ENCODE measurements at regions of chr13 and their contacts with region 1.

Region 1: GRCh38 chr13:97221989-97222700 is at the start of gene MBNL2:
- DNase-seq: peak; percentile 72
- ATAC-seq: peak; percentile 94
- H3K4me3 ChIP-seq: peak within 1 kb of the TSS; percentile 79 to 96
- H3K27ac ChIP-seq: peak within 1 kb of the TSS; percentile 99
- H3K4me1 ChIP-seq: peaks cover 39% of the 10 kb centered on the region
- H3K27me3 ChIP-seq: no peaks in the 10 kb centered on the region
- CTCF ChIP-seq: no peak
- total RNA-seq, gene MBNL2: 103 TPM

Region 2: GRCh38 chr13:97116754-97117153 is 105.4 kb before region 1 on chr13:
- CTCF ChIA-PET with region 1: no interaction called
- POLR2A ChIA-PET with region 1: interaction called, 11 read pairs
- in situ Hi-C with region 1: no loop called
- intact Hi-C with region 1: no loop called
- DNase-seq: no peak
- ATAC-seq: no peak
- H3K4me3 ChIP-seq: no peak overlapping the region
- H3K27ac ChIP-seq: peak overlapping the region; percentile 98
- H3K4me1 ChIP-seq: peaks cover 66% of the 10 kb centered on the region
- H3K27me3 ChIP-seq: no peaks in the 10 kb centered on the region
- CTCF ChIP-seq: no peak

Region 3: GRCh38 chr13:97141564-97142005 is 80.6 kb before region 1 on chr13:
- CTCF ChIA-PET with region 1: no interaction called
- POLR2A ChIA-PET with region 1: interaction called, 11 read pairs
- in situ Hi-C with region 1: no loop called
- intact Hi-C with region 1: no loop called
- DNase-seq: peak; percentile 69
- ATAC-seq: peak; percentile 98
- H3K4me3 ChIP-seq: peak overlapping the region; percentile 35 to 44
- H3K27ac ChIP-seq: peak overlapping the region; percentile 97
- H3K4me1 ChIP-seq: peaks cover 48% of the 10 kb centered on the region
- H3K27me3 ChIP-seq: no peaks in the 10 kb centered on the region
- CTCF ChIP-seq: no peak

Region 4: GRCh38 chr13:97242755-97243497 is 20.8 kb after region 1 on chr13:
- CTCF ChIA-PET with region 1: no interaction called
- POLR2A ChIA-PET with region 1: interaction called, 11 read pairs
- in situ Hi-C with region 1: no loop called
- intact Hi-C with region 1: no loop called
- DNase-seq: no peak
- ATAC-seq: peak; percentile 74
- H3K4me3 ChIP-seq: peak overlapping the region in 1 of 2 experiments; percentile 23; a peak in 2 of 4 replicates
- H3K27ac ChIP-seq: peak overlapping the region; percentile 100
- H3K4me1 ChIP-seq: peaks cover 94% of the 10 kb centered on the region
- H3K27me3 ChIP-seq: no peaks in the 10 kb centered on the region
- CTCF ChIP-seq: no peak

Region 5: DNA sequence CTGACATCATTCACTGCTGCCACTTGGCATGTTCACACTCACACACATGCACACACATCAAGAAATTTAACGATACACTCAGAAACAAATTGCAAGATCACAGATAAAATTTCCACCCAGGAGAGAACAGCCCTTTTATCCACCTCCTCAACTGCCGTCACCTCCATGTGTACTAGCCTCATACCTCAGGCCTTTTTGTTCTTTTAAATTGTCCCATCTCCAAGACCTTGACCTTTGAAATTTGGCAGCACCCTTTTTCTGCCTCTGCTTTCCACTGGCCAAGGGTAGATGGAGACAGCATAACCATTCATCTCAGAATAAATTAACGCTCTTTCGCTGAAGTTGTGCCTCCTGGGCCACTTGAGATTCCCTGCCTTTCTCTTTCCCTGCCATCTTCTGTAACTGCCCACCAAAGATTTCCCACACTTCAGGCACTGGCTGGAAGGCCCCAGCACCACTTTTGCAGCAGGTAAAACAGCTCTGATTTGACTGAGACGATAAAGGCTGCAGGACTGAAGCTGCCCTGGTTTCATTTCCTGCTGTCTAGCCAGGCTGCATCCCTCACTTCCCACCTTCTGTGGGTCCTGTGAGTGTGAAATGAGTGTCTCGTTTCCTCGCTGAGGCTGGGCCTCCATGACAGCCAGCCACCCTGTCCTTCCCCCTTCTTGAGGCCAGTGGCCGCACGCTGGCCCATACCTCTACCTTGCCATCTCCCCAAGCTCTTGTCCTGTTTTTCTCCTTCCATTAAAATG is 39.3 kb after region 1 on chr13:
- CTCF ChIA-PET with region 1: no interaction called
- POLR2A ChIA-PET with region 1: interaction called, 20 read pairs
- in situ Hi-C with region 1: no loop called
- intact Hi-C with region 1: loop called (anchors 5 kb)
- DNase-seq: no peak
- ATAC-seq: no peak
- H3K4me3 ChIP-seq: no peak overlapping the region
- H3K27ac ChIP-seq: peak overlapping the region; percentile 100
- H3K4me1 ChIP-seq: peaks cover 94% of the 10 kb centered on the region
- H3K27me3 ChIP-seq: no peaks in the 10 kb centered on the region
- CTCF ChIP-seq: no peak

Region 6: GRCh38 chr13:97280478-97280877 is 58.3 kb after region 1 on chr13:
- CTCF ChIA-PET with region 1: no interaction called
- POLR2A ChIA-PET with region 1: interaction called, 15 read pairs
- in situ Hi-C with region 1: no loop called
- intact Hi-C with region 1: no loop called
- DNase-seq: no peak
- ATAC-seq: peak; percentile 59
- H3K4me3 ChIP-seq: no peak overlapping the region
- H3K27ac ChIP-seq: peak overlapping the region; percentile 99
- H3K4me1 ChIP-seq: peaks cover 99% of the 10 kb centered on the region
- H3K27me3 ChIP-seq: no peaks in the 10 kb centered on the region
- CTCF ChIP-seq: no peak

Region 7: DNA sequence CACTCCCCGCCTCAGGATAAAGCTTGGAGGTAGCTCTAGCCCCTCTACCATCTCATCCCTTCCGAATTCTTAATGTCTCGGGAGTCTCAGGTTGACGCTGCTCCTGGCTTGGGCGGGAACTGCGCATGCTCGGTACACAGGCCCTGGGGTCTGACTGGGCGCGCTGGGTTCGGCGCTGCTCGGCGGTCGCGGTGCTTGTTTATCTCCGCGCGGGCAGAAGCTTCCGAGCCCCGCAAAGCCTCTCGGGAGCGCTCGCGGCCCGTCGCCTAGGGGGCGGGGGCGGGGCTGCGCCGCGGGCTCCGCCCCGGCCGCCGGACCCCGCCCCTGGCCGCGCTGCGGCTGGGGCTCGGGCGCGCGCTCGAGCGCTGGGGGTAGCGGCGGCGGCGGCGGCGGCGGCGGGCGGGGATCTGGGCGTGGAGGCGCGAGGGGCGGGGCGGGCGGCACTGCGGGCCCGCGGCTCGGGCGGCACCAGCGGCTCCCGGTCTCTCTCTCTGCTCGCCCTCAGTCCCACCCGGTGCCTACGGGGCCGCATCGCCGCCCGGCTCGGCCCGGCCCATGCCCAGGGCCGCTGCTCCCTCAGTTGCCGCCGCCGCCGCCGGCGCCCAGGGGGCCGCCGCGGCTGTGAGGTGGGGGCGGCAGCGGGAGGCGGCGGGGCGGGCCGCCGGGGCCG is 211.7 kb after region 1 on chr13 and contains the start of gene RAP2A:
- CTCF ChIA-PET with region 1: no interaction called
- POLR2A ChIA-PET with region 1: interaction called, 11 read pairs
- in situ Hi-C with region 1: no loop called
- intact Hi-C with region 1: no loop called
- DNase-seq: no peak
- ATAC-seq: peak; percentile 79
- H3K4me3 ChIP-seq: peak within 1 kb of the TSS; percentile 89 to 92
- H3K27ac ChIP-seq: peak within 1 kb of the TSS; percentile 89
- H3K4me1 ChIP-seq: peaks cover 23% of the 10 kb centered on the region; the same call in 1 of the 2 replicates
- H3K27me3 ChIP-seq: no peaks in the 10 kb centered on the region
- CTCF ChIP-seq: no peak
- total RNA-seq, gene RAP2A: 44.3 TPM

Measured in Panc1 (cell line).